K562 (cell line): ENCODE measurements at regions of chr3 and their contacts with region 1.

Region 1: GRCh38 chr3:44045476-44046275 is 196.0 kb upstream of the TOPAZ1 start:
- DNase-seq: peak in 2 of 4 experiments; percentile 22 to 27
- ATAC-seq: no peak; the same call in 2 of the 3 replicates
- H3K4me3 ChIP-seq: no peak overlapping the region
- H3K27ac ChIP-seq: no peak overlapping the region
- H3K4me1 ChIP-seq: no peaks in the 10 kb centered on the region
- H3K27me3 ChIP-seq: peaks cover 3 to 14% of the 10 kb centered on the region in 2 experiments; a peak in 2 of 5 replicates
- CTCF ChIP-seq: no peak
- EP300 ChIP-seq: no peak
- POLR2A ChIP-seq: no peak
- RAD21 ChIP-seq: 0 out of 4 replicates have a peak, but pooled peaks of 1 of the 2 experiments have one; percentile 7

Region 2: DNA sequence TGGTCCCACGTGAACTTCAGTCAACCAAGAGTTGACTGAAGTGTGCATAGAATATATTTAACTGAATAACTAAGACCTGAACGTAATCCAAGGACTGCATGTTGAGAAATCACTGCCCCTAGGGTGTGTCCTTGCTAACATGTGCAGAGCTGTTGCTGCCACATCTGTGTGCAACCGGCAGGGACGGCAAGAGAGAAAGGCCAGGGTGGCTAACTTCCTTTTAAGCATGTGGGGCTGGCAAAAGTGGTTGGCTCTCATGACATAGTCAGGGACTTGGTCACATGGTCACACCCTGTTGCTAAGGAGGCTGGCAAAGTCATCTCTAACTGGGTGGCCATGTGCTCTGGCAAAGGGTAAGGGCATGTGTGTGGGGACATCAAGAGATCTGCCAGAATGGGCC is 1014.2 kb before region 1 on chr3:
- CTCF ChIA-PET with region 1: no interaction called
- POLR2A ChIA-PET with region 1: no interaction called
- in situ Hi-C with region 1: loop called (anchors 10 kb)
- intact Hi-C with region 1: no loop called
- DNase-seq: no peak
- ATAC-seq: no peak
- H3K4me3 ChIP-seq: no peak overlapping the region
- H3K27ac ChIP-seq: no peak overlapping the region
- H3K4me1 ChIP-seq: no peaks in the 10 kb centered on the region
- H3K27me3 ChIP-seq: peaks cover 28 to 64% of the 10 kb centered on the region in 2 experiments
- CTCF ChIP-seq: no peak
- EP300 ChIP-seq: no peak
- POLR2A ChIP-seq: no peak
- RAD21 ChIP-seq: no peak

Region 3: GRCh38 chr3:44030687-44031305 is 14.9 kb before region 1 on chr3:
- CTCF ChIA-PET with region 1: no interaction called
- POLR2A ChIA-PET with region 1: no interaction called
- in situ Hi-C with region 1: no loop called
- intact Hi-C with region 1: no loop called
- DNase-seq: no peak
- ATAC-seq: no peak
- H3K4me3 ChIP-seq: no peak overlapping the region
- H3K27ac ChIP-seq: no peak overlapping the region
- H3K4me1 ChIP-seq: no peaks in the 10 kb centered on the region
- H3K27me3 ChIP-seq: peaks cover 5 to 58% of the 10 kb centered on the region in 2 experiments; a peak in 4 of 5 replicates
- CTCF ChIP-seq: no peak
- EP300 ChIP-seq: no peak
- POLR2A ChIP-seq: no peak
- RAD21 ChIP-seq: no peak